Right ventricle myocardium inferior (tissue), 1 donor: ENCODE measurements at regions of chr6 and their contacts with region 1.

Region 1: DNA sequence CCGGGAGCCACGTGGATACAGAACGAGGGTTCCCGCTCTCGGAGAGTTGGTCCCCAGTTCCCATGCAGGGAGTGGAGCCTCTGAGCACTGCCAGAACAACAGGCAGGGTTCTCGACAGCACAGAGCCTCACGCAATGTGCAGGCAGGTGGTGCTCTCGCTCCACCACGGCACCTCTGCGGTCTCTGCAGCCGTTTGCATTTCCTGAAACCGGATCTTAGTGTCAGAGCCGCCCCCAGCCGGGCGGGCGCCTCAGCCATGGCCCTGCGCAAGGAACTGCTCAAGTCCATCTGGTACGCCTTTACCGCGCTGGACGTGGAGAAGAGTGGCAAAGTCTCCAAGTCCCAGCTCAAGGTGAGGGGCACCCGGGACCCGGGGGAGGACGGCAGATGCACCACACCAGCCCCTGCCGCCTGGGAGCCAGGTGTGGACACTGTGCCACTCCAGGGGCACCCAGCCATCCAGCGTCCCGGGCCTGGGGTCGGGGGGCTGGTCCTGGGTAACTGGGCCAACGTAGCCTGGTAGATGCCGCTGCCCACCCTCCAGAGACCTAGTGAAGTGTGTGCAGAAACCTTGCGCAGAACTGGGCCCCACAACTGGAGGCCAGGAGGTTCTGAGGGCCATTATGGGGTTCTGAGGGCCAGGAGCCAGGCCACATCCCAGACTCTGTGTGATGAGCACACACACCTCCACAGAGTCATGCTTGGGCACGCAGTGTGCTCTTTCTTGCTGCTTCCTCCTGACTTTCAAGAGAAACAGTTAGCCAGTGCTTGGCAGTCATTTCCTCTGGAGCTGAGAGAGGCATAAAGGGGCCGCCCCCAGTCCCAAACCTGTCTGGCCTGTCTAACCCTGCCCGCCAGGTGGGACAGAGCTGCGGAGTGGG is at the start of gene DEF6:
- DNase-seq: peak; percentile 93
- ATAC-seq: peak; percentile 85
- total RNA-seq, gene DEF6: 2.8 TPM

Region 2: DNA sequence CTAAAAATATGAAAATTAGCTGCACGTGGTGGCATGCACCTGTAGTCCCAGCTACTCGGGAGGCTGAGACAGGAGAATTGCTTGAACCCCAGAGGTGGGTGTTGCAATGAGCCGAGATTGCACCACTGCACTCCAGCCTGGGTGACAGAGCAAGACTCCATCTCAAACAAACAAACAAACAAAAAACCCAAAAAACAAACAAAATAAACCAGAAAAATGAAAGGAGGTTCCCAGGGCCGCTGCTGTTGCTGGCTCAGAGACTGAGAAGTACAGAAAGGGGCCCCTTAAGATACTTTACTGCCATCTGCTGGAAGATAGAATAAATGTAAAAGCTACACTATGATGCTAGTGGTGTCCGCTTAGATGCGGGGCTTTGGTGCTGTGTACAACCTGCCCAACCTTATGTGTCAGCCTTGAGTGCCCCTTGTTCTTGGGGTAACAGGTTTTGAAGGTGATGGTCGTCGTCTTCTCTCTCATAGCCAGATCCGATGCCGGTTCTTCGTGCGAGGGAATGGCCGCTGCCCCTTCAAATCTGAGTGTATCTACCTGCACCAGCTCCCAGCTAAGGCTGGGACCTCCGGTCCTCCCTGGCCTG is 151.5 kb after region 1 on chr6:
- intact Hi-C with region 1: loop called (anchors 1 kb)
- DNase-seq: no peak
- ATAC-seq: peak; percentile 68

Region 3: DNA sequence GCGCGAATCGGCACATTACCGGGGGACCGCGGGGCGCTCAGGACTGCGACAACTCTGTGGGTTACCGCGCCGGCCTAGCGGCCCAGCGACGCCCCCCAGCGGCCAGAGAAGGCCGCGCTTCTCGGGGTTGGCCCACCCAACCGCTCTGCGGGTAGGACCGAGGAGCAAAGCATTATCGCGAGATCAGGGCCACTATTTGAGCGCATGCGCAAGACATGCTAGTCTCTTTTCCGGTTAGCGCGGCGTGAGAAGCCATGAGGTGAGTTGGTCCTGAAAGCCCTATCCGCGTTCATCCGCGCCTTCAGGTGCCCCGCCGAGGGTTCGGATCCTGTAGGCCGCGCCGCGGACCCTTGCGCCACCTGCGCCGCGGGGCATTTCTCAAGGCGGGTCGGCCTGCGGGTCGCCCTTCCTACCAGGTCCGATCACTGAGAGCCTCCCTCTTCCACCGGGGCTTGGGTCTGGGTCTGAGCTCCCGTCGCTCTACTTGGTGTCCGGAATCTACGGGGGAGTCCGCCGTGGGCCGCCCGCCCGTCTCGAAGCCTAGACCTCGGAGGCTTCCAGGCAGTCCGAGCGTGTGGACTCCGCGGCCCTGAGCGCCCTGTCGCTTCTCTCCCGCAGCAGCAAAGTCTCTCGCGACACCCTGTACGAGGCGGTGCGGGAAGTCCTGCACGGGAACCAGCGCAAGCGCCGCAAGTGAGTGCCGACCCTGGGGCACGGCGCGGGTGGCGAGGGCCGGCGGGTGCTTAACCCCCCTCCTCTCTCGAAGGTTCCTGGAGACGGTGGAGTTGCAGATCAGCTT is 170.5 kb after region 1 on chr6 and contains the start of gene RPL10A:
- intact Hi-C with region 1: loop called (anchors 5 kb)
- DNase-seq: peak; percentile 93
- ATAC-seq: peak; percentile 89
- total RNA-seq, gene RPL10A: 606 TPM